Posterior vena cava (tissue), 2 donors: ENCODE measurements at regions of chr1 and their contacts with region 1.

Region 1: DNA sequence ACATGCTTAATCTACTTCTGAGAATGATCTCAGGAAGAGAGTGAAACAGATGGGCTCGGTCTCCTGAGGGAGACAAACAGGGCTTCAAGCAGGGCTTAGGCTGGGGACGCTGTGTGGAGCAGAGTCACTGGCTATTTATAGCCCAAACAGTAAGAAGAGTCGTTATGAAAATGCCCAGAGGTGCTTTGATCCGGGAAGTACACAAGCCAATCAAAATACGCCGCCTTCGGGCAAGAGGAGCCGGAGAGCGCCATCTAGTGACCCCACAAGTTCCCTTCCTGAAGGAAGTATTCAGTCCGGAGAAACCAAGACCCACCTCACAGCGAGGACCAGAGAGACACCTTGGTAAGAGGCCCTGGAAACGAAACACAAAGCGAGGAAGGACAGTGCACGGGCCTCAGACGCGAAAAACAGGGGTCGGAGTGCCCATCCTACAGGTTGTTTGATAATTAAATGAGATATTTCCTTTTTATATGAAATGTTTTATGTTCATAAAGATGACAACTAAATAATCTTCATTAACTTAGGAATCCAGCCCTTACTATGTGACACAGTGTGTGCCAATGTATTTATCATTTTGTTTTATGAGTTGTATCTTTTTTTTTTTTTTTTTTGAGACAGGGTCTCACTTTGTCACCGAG is 25.0 kb upstream of the SCCPDH start:
- DNase-seq: peak; percentile 93

Region 2: DNA sequence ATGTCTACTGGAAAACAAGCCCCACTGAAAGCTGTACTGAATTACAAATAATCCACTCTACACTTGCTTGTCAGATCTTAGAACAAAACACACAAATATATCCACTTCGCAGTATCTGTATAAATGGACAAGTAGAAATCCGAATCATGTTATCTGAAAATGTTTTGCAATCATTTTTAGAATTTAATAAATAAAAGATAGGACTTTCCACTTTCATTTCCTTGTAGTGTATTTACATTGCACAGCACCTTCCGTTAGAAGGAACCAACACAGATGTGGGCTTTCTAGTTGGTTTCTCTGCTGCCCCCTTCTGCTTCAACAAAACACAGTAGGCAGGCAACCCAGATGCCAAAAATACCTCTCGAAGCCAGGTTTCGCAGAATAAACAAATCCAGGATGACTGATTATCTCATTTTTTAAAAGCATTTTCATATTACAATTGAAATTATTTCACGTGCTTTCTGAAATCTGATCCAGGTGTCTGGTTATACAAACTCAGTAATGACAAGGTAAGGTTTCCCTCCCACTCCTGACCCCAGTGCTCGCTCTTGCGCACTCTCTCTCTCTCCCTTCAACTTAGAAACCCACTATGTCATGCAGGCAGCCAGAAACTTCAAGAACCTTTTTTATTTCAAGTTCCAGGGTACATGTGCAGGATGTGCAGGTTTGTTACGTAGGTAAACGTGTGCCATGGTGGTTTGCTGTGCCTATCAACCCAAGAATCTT is 582.0 kb before region 1 on chr1:
- intact Hi-C with region 1: no loop called
- DNase-seq: no peak

Region 3: GRCh38 chr1:246404078-246404477 is 295.1 kb before region 1 on chr1:
- intact Hi-C with region 1: no loop called
- DNase-seq: no peak

Region 4: GRCh38 chr1:246497331-246497915 is 201.8 kb before region 1 on chr1:
- intact Hi-C with region 1: loop called (anchors 5 kb)
- DNase-seq: no peak

Region 5: DNA sequence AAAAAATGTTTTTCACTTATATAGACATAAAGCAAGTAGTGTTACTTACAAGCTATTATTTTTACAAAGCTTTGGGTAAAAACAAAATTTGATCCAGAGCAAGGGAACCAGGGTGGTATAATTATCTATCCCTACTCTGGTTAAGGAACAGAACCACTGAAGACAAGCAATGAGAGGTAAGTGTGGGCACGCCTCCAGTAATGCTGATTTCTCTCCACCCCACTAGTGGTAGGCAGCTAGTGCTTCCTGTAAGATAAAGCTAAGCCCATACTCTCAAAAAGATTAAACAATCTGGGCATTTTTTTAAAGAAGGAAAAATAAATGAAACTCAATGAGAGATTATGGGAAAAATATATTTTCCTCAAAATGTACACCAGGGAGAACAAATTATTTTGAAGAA is 155.2 kb before region 1 on chr1:
- intact Hi-C with region 1: no loop called
- DNase-seq: no peak

Region 6: DNA sequence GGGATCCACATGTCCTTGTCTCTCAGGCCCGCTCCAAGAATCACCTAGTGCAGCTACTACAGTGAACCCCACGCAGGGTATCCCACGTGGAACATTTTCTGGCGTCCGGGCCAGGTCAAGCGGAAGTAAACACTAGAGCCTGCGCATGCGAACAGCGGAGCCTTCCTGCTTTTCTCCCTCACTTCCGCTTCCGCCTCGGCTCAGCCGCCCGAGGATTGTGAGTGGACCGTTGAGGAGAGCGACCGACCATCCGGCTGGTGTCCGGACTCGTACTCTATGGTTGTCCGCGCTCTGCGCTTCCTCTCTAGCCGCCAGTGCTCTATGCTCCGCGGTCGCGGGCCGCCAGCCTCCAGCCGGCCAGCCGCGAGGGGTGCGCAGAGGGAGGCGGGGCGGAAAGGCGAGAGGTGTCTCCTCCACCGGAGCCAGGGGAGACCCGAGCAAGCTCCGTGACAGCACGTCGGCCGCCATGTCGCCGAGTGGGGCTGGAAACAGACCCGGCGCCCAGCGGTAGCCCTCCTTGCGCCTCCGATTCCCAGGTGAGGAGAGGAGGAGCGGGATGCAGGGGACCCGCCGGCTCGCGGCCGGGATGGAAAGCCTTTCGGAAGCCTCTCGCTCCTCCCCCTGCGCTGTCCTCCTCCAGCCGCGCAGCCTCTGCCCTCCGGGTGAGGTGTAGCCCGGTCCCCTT is 132.9 kb before region 1 on chr1 and contains the starts of genes CNST and TFB2M:
- intact Hi-C with region 1: loop called in 1 of 2 experiments (anchors 10 kb)
- DNase-seq: peak; percentile 99
- total RNA-seq, gene CNST: 27.9 to 29.8 TPM
- total RNA-seq, gene TFB2M: 6.9 to 7.3 TPM

Region 7: GRCh38 chr1:246647113-246647512 is 52.1 kb before region 1 on chr1:
- intact Hi-C with region 1: loop called in 1 of 2 experiments (anchors 5 kb)
- DNase-seq: peak; percentile 85

Region 8: DNA sequence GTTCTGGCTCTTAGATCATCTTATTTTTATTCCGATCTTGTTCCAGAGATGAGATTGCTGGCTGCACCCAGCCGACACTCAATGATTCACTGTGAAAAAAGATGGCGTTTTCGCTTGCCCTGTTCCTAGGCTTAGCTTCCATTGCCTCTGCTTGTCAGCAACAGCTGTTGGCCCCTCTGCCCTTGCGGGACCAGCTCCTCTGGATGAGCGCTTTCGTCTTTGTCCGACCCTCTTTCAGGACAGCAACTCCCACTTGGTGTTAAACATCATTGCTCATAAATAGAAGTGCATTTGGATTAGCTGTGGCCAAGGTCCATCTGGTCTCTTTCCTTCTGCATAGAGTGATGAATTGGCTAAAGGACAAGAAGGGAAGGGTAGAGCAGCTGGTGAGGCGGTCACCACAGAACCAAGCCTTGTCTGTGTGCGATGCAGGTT is 18.5 kb before region 1 on chr1:
- intact Hi-C with region 1: no loop called
- DNase-seq: no peak